Panc1 (cell line): ENCODE measurements at regions of chr6 and their contacts with region 1.

Region 1: GRCh38 chr6:158605266-158605878 is 39.2 kb downstream of the DYNLT1 start:
- DNase-seq: peak; percentile 53
- ATAC-seq: peak; percentile 88
- H3K4me3 ChIP-seq: no peak overlapping the region
- H3K27ac ChIP-seq: no peak overlapping the region
- H3K4me1 ChIP-seq: no peaks in the 10 kb centered on the region
- H3K27me3 ChIP-seq: no peaks in the 10 kb centered on the region
- CTCF ChIP-seq: peak; percentile 84

Region 2: GRCh38 chr6:159125014-159125609 is 519.7 kb after region 1 on chr6:
- CTCF ChIA-PET with region 1: interaction called, 10 read pairs
- POLR2A ChIA-PET with region 1: no interaction called
- in situ Hi-C with region 1: no loop called
- intact Hi-C with region 1: no loop called
- DNase-seq: no peak
- ATAC-seq: no peak
- H3K4me3 ChIP-seq: no peak overlapping the region
- H3K27ac ChIP-seq: no peak overlapping the region
- H3K4me1 ChIP-seq: no peaks in the 10 kb centered on the region
- H3K27me3 ChIP-seq: peaks cover 2% of the 10 kb centered on the region; the same call in 1 of the 2 replicates
- CTCF ChIP-seq: peak; percentile 63; the same call in 1 of the 2 replicates